ENCODE measurements at regions of chr1 and their contacts with region 1.

Region 1: DNA sequence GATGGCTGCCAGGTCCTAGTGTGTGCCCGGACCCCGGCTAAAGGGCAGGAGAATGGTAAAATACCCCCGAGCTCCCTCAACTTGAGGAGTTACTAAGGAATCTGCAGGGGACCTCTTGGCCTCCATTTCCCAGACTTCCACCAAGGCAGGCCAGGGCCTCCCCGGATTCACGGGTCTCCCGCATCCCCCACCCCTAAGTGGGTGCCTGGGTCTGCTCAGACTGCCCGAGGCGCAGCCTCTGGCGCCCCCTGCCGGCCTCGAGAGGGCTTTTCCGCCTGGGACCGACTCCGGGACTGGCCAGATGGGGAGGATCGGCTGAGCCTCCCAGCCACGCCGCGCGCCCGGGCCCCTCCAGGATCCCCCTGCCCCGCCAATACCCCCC is 1.7 kb downstream of the PLEKHG5 start:
- DNase-seq: peak; percentile 29
- H3K4me3 ChIP-seq: peak overlapping the region; percentile 91
- H3K27ac ChIP-seq: peak overlapping the region; percentile 82
- H3K27me3 ChIP-seq: no peaks in the 10 kb centered on the region
- CTCF ChIP-seq: peak; percentile 90

Region 2: DNA sequence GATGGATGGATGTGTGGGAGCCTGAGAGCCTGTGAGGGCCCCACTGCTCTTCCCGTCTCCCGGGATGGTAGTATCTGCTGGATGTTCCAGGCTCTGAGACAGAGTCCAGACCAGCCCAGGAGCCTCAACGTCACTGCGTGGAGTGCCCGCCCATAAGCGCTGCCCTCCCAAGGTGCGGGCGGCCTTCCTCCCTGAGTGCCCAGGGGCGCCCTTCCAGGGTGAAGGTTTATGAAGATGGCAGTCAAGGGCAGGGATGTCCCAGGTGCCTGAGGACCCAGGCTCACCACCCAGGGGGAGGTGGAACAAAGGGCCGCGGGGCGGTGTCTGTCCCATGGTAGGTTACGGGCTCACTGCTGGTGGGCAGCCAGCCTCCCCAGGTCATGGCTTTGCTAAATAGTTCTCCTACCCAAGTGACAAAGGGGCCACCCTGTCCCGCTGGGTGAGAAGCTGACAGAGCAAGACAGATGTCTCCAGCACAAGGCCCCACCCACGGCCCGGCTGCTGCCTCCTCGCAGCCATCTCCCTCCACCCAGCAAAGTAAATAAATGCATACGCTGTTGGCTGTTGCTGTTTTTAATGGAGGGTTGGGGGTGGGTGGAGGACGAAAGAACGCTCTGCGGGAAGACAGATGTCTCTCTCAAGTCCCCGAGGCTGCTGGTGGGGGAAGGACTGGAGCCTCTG is 219.9 kb before region 1 on chr1:
- CTCF ChIA-PET with region 1: no interaction called
- POLR2A ChIA-PET with region 1: no interaction called
- DNase-seq: no peak
- H3K4me3 ChIP-seq: no peak overlapping the region
- H3K27ac ChIP-seq: no peak overlapping the region
- H3K27me3 ChIP-seq: no peaks in the 10 kb centered on the region
- CTCF ChIP-seq: no peak

Region 3: DNA sequence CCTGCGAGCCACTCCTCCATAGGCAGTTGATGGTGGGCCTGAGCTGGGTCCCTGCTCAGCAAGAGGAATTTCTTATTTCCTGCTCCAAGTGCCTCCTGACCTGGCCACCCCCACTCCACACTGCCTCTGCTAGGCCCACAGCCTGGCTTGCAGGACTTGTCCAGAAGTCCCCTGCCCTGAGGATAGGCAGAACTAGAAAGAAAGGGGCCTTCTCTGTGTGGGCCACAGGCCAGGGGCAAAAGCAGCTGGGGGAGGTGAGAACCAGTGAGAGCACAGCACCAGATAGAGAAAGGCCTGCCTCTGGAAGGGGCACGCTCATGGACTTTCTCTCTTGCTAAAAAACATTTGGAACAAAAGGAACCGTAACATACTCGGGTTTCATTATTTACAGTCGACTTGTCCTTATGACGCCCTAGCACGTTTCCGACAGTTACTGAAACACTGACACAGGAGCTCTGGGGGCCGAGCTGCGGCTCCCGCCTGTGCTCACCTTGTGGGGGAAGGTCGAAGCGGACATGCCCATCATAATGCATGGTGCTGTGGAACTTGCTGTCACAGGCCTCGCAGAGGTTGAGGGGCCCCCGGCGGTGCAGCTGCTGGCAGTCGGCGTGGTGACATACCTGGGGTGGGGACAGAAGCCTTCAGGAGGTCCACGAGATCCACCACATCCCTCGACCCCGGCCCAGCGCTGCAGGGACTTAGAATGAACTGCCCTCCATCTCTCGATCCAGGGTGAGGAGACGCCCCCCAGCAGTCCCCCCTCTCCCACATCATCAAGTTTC is 12.6 kb before region 1 on chr1:
- CTCF ChIA-PET with region 1: interaction called, 19 read pairs
- POLR2A ChIA-PET with region 1: no interaction called
- DNase-seq: no peak
- H3K4me3 ChIP-seq: no peak overlapping the region
- H3K27ac ChIP-seq: no peak overlapping the region
- H3K27me3 ChIP-seq: no peaks in the 10 kb centered on the region
- CTCF ChIP-seq: no peak

Region 4: DNA sequence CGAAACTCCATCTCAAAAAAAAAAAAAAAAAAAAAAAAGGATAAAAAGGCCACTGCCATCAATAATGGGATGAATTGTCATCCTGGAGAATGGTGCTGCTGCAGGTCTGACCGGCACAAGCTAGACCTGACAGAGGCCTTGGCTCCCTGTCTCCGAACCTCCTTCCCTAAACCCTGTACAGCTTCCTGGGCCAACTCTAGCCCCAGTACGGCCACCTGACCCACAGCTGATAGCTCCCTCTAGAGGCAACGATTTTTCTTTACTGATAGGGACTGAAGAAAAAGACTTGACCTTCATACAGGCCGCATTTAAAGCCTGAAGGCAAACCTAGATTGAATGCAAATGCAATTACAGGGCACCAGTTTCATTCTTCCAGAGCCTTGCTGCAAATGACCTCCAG is 33.8 kb after region 1 on chr1:
- CTCF ChIA-PET with region 1: interaction called, 17 read pairs
- POLR2A ChIA-PET with region 1: no interaction called
- DNase-seq: no peak
- H3K4me3 ChIP-seq: no peak overlapping the region
- H3K27ac ChIP-seq: no peak overlapping the region
- H3K27me3 ChIP-seq: no peaks in the 10 kb centered on the region
- CTCF ChIP-seq: peak; percentile 63

Region 5: DNA sequence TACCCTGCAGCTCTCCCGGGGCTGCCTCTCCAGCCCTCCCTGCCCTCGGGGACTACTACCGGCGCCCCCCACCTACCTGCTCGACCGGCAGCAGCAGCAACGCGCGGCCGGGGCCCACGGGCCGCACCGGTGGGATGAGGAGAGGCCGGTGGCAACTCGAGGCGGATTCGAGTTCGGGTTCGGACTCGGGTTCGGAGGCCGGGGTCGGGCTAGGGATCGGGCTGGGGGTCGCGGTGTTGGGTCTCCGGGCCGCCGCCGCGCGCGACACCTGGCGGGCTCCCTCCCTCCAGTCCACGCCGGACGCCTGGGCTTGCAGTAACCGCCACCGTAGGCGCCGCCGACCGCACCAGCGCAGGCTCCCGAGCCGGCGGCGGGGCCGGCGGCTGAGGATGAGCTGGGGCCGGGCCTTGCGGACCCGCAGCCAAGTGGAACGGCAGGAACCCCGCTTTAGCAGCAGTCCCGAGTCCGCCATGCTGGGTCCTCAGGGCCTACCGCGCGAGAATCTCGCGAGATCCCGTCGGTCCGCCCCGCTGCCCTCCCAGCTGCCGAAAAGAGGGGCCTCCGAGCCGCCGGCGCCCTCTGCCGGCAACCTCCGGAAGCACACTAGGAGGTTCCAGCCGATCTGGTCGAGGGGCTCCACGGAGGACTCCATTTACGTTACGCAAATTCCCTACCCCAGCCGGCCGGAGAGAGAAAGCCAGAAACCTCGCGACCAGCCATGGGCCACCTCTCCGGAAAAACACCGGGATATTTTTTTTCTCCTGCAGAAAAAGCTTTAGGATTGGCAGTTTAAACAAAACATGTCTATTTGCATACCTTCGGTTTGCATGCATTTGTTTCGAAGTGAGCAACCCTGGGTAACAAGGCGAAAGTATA is 64.5 kb after region 1 on chr1 and contains the start of gene NOL9:
- CTCF ChIA-PET with region 1: interaction called, 16 read pairs
- POLR2A ChIA-PET with region 1: no interaction called
- DNase-seq: peak; percentile 79
- H3K4me3 ChIP-seq: peak within 1 kb of the TSS; percentile 91
- H3K27ac ChIP-seq: no peak within 1 kb of the TSS
- H3K27me3 ChIP-seq: no peaks in the 10 kb centered on the region
- CTCF ChIP-seq: peak; percentile 91
- polyA plus RNA-seq, gene NOL9: 17.9 and 23.6 TPM in 2 replicates

Measured in AG04450 (cell line).